ENCODE measurements at regions of chr5 and their contacts with region 1.

Region 1: GRCh38 chr5:134184155-134185135 is 7.7 kb upstream of the SKP1 start:
- DNase-seq: peak; percentile 64 to 83 (median 76)
- ATAC-seq: peak; percentile 96
- H3K4me3 ChIP-seq: no peak overlapping the region
- H3K4me1 ChIP-seq: no peaks in the 10 kb centered on the region
- CTCF ChIP-seq: peak; percentile 84

Region 2: DNA sequence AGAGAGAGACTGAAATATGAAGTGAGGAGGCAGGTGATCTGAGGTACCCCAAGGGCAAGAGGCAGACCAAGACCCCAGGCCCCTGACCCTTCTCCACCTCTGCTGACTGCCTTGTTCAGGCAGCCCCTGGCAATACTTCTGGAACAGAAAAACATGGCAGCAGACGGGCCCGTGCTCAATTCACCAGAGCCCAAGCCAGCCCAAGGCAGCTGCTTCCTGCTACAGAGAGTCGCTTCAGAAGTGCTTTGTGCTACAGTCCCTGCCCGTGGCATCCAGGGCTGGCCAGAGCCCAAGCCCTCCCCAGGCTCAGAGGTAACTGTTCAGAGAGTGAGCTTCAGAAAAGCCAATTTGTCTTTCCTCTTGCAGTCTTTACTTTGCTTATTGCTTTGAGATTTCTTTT is 420.7 kb before region 1 on chr5:
- intact Hi-C with region 1: no loop called
- DNase-seq: no peak
- ATAC-seq: no peak
- H3K4me3 ChIP-seq: no peak overlapping the region
- H3K4me1 ChIP-seq: no peaks in the 10 kb centered on the region
- CTCF ChIP-seq: no peak

Region 3: GRCh38 chr5:134004592-134005375 is 179.7 kb before region 1 on chr5 and contains the start of gene VDAC1:
- intact Hi-C with region 1: no loop called
- DNase-seq: peak; percentile 77 to 91 (median 86)
- ATAC-seq: peak; percentile 92
- H3K4me3 ChIP-seq: peak within 1 kb of the TSS; percentile 95
- H3K4me1 ChIP-seq: peaks cover 32% of the 10 kb centered on the region
- CTCF ChIP-seq: no peak
- total RNA-seq, gene VDAC1: 153 to 283 (median 246) TPM

Region 4: DNA sequence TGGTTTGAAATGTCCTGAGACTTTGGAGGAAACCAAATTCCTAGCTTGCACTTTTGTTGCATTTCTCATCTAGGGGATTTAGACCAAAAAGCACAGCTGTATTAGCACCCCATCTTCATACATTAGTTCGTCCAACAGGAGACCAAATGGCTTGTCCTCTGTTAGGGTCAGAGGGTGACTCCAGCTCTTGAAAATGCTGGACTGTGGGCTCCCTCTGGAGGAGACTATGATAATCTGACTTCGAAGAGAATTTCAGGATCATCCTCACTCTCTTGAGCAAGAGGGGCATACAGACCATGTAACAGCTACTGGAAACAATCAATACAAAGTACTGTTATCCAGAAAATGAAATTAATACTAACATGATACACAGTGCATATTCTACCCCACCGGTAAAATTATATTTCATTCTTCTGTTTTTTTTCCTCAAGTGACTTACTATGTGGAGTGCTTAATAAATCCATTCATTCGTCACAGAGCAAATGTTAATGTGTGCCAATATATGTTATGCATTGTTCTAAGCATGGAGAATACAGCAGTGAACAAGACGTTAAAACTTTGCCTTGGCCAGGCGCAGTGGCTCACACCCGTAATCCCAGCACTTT is 105.2 kb after region 1 on chr5:
- intact Hi-C with region 1: loop called (anchors 2 kb)
- DNase-seq: peak in 1 of 3 donors; percentile 73
- ATAC-seq: peak; percentile 92
- H3K4me3 ChIP-seq: no peak overlapping the region
- H3K4me1 ChIP-seq: no peaks in the 10 kb centered on the region
- CTCF ChIP-seq: no peak

Region 5: DNA sequence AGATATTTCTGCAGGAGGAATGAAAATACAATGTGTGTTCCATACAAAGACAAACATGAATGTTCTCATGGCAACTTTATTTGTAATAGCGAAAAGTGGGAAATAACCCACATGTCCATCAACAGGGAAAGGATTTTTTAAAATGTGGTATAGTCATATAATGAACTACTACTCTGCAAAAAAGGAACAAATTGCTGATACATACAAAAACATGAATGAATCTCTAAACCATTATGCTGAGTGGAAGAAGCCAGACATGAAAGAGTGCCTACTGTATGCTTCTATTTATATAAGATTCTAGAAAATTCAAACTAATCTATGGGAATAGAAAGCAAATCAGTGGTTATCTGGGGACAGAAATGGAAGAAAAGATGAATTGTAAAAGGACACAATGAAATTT is 130.0 kb after region 1 on chr5:
- intact Hi-C with region 1: no loop called
- DNase-seq: no peak
- ATAC-seq: no peak
- H3K4me3 ChIP-seq: no peak overlapping the region
- H3K4me1 ChIP-seq: no peaks in the 10 kb centered on the region
- CTCF ChIP-seq: no peak

Region 6: GRCh38 chr5:134533115-134533815 is 348.8 kb after region 1 on chr5:
- intact Hi-C with region 1: no loop called
- DNase-seq: no peak
- ATAC-seq: no peak
- H3K4me3 ChIP-seq: no peak overlapping the region
- H3K4me1 ChIP-seq: peaks cover 22% of the 10 kb centered on the region
- CTCF ChIP-seq: no peak